ENCODE measurements at regions of chr9 and their contacts with region 1.

Region 1: GRCh38 chr9:126482361-126483044 is 131.2 kb upstream of the LMX1B start:
- DNase-seq: no peak
- H3K4me3 ChIP-seq: no peak overlapping the region
- H3K4me3 Mint-ChIP-seq: no peak overlapping the region
- H3K27ac ChIP-seq: no peak overlapping the region
- H3K27ac Mint-ChIP-seq: no peak overlapping the region
- H3K4me1 ChIP-seq: peaks cover 14% of the 10 kb centered on the region
- H3K4me1 Mint-ChIP-seq: peaks cover 13 to 43% (median 27%) of the 10 kb centered on the region in 3 donors
- H3K27me3 ChIP-seq: no peaks in the 10 kb centered on the region
- H3K27me3 Mint-ChIP-seq: no peaks in the 10 kb centered on the region

Region 2: DNA sequence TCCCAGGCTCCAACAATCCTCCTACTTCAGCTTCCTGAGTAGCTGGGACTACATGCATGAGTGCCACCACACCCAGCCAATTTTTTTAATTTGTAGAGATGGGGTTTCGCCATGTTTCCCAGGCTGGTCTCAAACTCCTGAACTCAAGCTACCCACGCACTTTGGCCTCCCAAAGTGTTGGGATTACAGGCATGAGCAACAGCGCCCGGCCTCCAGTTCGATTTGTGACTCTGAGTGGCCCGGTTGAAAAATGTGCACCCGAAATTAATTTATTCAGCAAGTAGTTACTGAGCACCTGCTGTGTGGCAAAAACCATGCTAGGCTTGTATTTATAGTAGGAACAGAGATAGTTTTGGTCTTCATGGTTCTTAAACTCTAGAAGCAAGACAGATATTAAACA is 97.6 kb before region 1 on chr9:
- CTCF ChIA-PET with region 1: no interaction called
- POLR2A ChIA-PET with region 1: interaction called, 10 read pairs
- DNase-seq: no peak
- H3K4me3 ChIP-seq: no peak overlapping the region
- H3K4me3 Mint-ChIP-seq: no peak overlapping the region
- H3K27ac ChIP-seq: no peak overlapping the region
- H3K27ac Mint-ChIP-seq: peak overlapping the region in 3 of 8 donors; percentile 3 to 65 (median 59)
- H3K4me1 ChIP-seq: no peaks in the 10 kb centered on the region
- H3K4me1 Mint-ChIP-seq: peaks cover under 1 to 19% (median 3%) of the 10 kb centered on the region in 3 donors
- H3K27me3 ChIP-seq: no peaks in the 10 kb centered on the region
- H3K27me3 Mint-ChIP-seq: no peaks in the 10 kb centered on the region

Region 3: DNA sequence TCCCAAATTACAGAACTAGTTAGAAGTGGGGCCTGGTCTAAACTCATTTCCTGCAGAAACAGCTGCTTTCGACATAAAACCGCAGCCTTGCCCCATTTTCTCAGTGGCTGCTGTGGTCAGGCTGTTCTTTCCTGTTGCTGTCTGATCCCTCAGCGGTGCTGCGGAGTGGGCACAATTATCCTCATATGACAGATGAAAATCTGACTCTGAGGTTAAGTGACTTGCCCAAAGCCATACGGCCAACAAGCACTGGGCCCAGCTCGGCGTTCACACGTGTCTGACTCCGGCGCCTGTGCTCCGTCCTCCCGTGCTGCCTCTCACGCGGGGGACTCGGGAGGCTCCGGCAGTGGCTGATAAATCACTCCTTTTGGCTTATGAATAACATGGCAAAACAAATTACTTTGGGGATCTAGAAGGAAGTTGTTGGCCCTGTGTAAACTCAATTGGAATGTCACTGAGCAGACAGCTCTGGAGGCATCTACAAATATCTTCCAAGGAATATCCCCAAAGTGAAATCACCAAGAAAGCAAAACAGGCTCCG is 11.3 kb before region 1 on chr9:
- CTCF ChIA-PET with region 1: interaction called, 12 read pairs
- POLR2A ChIA-PET with region 1: interaction called, 3 read pairs
- DNase-seq: peak; percentile 60 to 90 (median 76)
- H3K4me3 ChIP-seq: peak overlapping the region; percentile 39
- H3K4me3 Mint-ChIP-seq: peak overlapping the region; percentile 71 to 89 (median 80)
- H3K27ac ChIP-seq: no peak overlapping the region
- H3K27ac Mint-ChIP-seq: peak overlapping the region; percentile 91 to 99 (median 96)
- H3K4me1 ChIP-seq: peaks cover 58% of the 10 kb centered on the region
- H3K4me1 Mint-ChIP-seq: peaks cover 82 to 97% (median 84%) of the 10 kb centered on the region in 3 donors
- H3K27me3 ChIP-seq: no peaks in the 10 kb centered on the region
- H3K27me3 Mint-ChIP-seq: peaks cover 0 to 1% of the 10 kb centered on the region in 2 donors

Region 4: GRCh38 chr9:126516936-126517832 is 34.7 kb after region 1 on chr9:
- CTCF ChIA-PET with region 1: no interaction called
- POLR2A ChIA-PET with region 1: no interaction called
- DNase-seq: peak in 3 of 5 donors; percentile 10 to 49 (median 33)
- H3K4me3 ChIP-seq: peak overlapping the region; percentile 54
- H3K4me3 Mint-ChIP-seq: peak overlapping the region; percentile 86 to 99 (median 91)
- H3K27ac ChIP-seq: peak overlapping the region; percentile 35
- H3K27ac Mint-ChIP-seq: peak overlapping the region; percentile 81 to 95 (median 90)
- H3K4me1 ChIP-seq: peaks cover 36% of the 10 kb centered on the region
- H3K4me1 Mint-ChIP-seq: peaks cover 39 to 49% (median 40%) of the 10 kb centered on the region in 3 donors
- H3K27me3 ChIP-seq: peaks cover 12% of the 10 kb centered on the region
- H3K27me3 Mint-ChIP-seq: peaks cover 2 to 37% of the 10 kb centered on the region in 2 donors

Measured in CD8-positive, alpha-beta memory T cell (primary cell).